Panc1 (cell line): ENCODE measurements at regions of chr22 and their contacts with region 1.

Region 1: GRCh38 chr22:29338398-29338797 is 22.9 kb upstream of the RASL10A start:
- DNase-seq: no peak
- ATAC-seq: no peak
- H3K4me3 ChIP-seq: no peak overlapping the region
- H3K27ac ChIP-seq: no peak overlapping the region
- H3K4me1 ChIP-seq: no peaks in the 10 kb centered on the region
- H3K27me3 ChIP-seq: no peaks in the 10 kb centered on the region
- CTCF ChIP-seq: no peak

Region 2: DNA sequence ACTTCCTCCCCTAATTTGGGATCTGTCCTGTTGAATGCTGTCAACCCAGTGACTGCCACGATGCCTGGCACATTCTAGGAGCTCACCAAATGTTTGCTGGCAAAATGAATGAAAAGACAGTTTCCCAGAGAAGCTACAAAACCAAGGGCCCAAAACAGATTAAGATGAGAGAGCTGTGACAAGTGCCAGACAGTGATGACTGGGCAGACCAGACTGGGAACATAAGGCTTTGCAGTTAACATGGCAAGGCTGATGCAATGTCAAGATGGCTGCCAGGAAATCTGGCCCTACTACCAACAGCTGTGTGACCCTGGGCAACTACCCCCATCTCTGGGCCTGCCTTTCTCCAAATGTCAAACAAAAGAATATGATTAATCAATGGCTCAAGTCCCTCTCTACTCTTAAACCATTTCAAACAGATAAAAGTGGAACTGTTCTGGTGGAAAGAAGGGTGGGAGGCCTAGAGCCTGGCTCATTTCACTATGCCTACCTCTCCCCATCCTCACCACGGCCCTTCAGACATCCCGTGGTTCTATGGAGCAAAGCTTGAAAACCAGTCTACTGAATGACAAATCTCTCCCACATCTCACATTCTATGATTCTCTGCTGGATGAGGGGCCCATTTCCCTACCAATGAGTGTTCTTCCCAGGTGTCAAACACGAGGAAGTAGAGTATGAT is 37.1 kb after region 1 on chr22:
- CTCF ChIA-PET with region 1: interaction called, 11 read pairs
- POLR2A ChIA-PET with region 1: no interaction called
- in situ Hi-C with region 1: no loop called
- intact Hi-C with region 1: no loop called
- DNase-seq: no peak
- ATAC-seq: no peak
- H3K4me3 ChIP-seq: no peak overlapping the region
- H3K27ac ChIP-seq: no peak overlapping the region
- H3K4me1 ChIP-seq: no peaks in the 10 kb centered on the region
- H3K27me3 ChIP-seq: no peaks in the 10 kb centered on the region
- CTCF ChIP-seq: no peak